Caco-2 (cell line): ENCODE measurements at regions of chr17 and their contacts with region 1.

Region 1: GRCh38 chr17:76612977-76613851 is 27.6 kb upstream of the ST6GALNAC2 start:
- DNase-seq: peak; percentile 87 to 94
- H3K4me3 ChIP-seq: no peak overlapping the region
- H3K4me3 Mint-ChIP-seq: peak overlapping the region; percentile 49
- H3K27ac Mint-ChIP-seq: peak overlapping the region; percentile 91
- H3K4me1 ChIP-seq: peaks cover 33% of the 10 kb centered on the region
- H3K4me1 Mint-ChIP-seq: peaks cover 38% of the 10 kb centered on the region
- H3K27me3 ChIP-seq: no peaks in the 10 kb centered on the region
- H3K27me3 Mint-ChIP-seq: no peaks in the 10 kb centered on the region
- CTCF ChIP-seq: peak in 1 of 2 experiments; percentile 33

Region 2: DNA sequence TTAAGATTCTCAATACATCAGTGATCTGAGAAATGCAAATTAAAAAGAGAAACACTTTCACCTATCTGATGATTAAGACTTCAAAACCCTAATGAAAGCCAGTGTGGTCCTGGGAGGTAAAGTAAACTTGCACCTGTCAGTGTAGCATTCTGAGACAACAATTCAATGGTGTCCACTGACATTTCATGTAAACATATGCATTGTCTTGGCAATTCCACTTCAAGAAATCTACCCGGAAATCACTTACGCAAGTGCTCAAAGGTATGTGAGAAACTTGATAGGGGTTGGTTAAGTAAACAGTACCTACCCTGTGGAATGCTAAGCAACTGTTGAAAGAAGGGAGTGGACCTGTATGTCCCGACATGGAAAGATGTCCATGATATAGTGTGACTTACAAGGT is 28.3 kb after region 1 on chr17:
- CTCF ChIA-PET with region 1: no interaction called
- POLR2A ChIA-PET with region 1: no interaction called
- intact Hi-C with region 1: loop called (anchors 1 kb)
- DNase-seq: peak; percentile 80 to 85
- H3K4me3 ChIP-seq: no peak overlapping the region
- H3K4me3 Mint-ChIP-seq: no peak overlapping the region
- H3K27ac Mint-ChIP-seq: peak overlapping the region; percentile 80
- H3K4me1 ChIP-seq: peaks cover 60% of the 10 kb centered on the region
- H3K4me1 Mint-ChIP-seq: peaks cover 61% of the 10 kb centered on the region
- H3K27me3 ChIP-seq: no peaks in the 10 kb centered on the region
- H3K27me3 Mint-ChIP-seq: no peaks in the 10 kb centered on the region
- CTCF ChIP-seq: no peak

Region 3: DNA sequence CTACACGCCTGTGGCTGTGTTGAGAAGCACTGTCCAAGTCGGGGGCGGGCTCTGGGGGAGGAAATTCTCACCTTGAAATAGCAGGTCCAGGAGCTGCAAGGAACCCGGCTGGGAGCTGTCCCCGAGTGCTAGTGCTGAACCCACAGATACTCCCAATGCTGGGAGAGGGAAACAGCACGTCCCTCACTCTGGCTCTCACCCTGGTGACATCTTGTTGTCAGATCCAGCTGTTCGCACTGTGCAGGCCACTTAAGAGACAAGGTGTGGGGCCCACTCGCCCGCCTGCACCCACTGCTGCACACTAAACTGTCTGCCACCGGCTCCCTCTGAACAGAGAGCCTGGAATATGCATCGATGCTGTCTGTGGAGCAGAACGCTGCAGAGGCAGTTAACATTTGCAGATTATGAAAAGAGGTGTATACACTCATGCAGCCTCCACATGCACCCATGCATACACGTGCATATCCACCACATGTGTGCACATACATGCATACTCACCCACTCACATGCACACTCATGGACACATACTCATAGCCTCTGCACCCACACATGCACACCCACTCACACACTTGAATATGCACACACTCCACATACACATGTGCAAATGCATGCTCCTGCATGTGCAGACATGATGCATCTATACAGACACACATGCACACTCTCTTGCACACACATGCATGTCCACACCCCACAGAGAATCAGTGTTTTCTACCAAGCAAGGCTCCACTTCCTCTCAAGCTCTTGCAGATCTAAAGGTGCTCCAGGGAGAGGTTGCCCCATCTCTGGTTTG is 297.0 kb after region 1 on chr17:
- CTCF ChIA-PET with region 1: no interaction called
- POLR2A ChIA-PET with region 1: no interaction called
- intact Hi-C with region 1: no loop called
- DNase-seq: peak; percentile 82 to 88
- H3K4me3 ChIP-seq: no peak overlapping the region
- H3K4me3 Mint-ChIP-seq: no peak overlapping the region
- H3K27ac Mint-ChIP-seq: no peak overlapping the region
- H3K4me1 ChIP-seq: peaks cover 16% of the 10 kb centered on the region
- H3K4me1 Mint-ChIP-seq: peaks cover 22% of the 10 kb centered on the region
- H3K27me3 ChIP-seq: no peaks in the 10 kb centered on the region
- H3K27me3 Mint-ChIP-seq: no peaks in the 10 kb centered on the region
- CTCF ChIP-seq: no peak